ENCODE measurements at regions of chr10 and their contacts with region 1.

Region 1: GRCh38 chr10:62011558-62011957 is 110.1 kb downstream of the ARID5B start:
- DNase-seq: peak; percentile 54
- H3K4me3 Mint-ChIP-seq: no peak overlapping the region
- H3K27ac Mint-ChIP-seq: peak overlapping the region; percentile 18
- H3K4me1 Mint-ChIP-seq: peaks cover 15% of the 10 kb centered on the region
- H3K27me3 Mint-ChIP-seq: no peaks in the 10 kb centered on the region
- CTCF ChIP-seq: no peak

Region 2: GRCh38 chr10:62025901-62026879 is 14.6 kb after region 1 on chr10:
- CTCF ChIA-PET with region 1: interaction called, 11 read pairs
- intact Hi-C with region 1: no loop called
- DNase-seq: no peak
- H3K4me3 Mint-ChIP-seq: no peak overlapping the region
- H3K27ac Mint-ChIP-seq: no peak overlapping the region
- H3K4me1 Mint-ChIP-seq: peaks cover 25% of the 10 kb centered on the region
- H3K27me3 Mint-ChIP-seq: no peaks in the 10 kb centered on the region
- CTCF ChIP-seq: no peak

Region 3: GRCh38 chr10:62335326-62335725 is 323.8 kb after region 1 on chr10:
- CTCF ChIA-PET with region 1: no interaction called
- intact Hi-C with region 1: no loop called
- DNase-seq: no peak
- H3K4me3 Mint-ChIP-seq: no peak overlapping the region
- H3K27ac Mint-ChIP-seq: no peak overlapping the region
- H3K4me1 Mint-ChIP-seq: peaks cover 10% of the 10 kb centered on the region
- H3K27me3 Mint-ChIP-seq: no peaks in the 10 kb centered on the region
- CTCF ChIP-seq: no peak